ENCODE measurements at regions of chr7 and their contacts with region 1.

Region 1: GRCh38 chr7:143979205-143979758 is 20.8 kb upstream of the OR6B1 start:
- DNase-seq: no peak
- ATAC-seq: no peak
- H3K4me3 ChIP-seq: no peak overlapping the region
- H3K27ac ChIP-seq: no peak overlapping the region
- H3K4me1 ChIP-seq: no peaks in the 10 kb centered on the region
- H3K27me3 ChIP-seq: no peaks in the 10 kb centered on the region
- CTCF ChIP-seq: no peak

Region 2: GRCh38 chr7:142943706-142944268 is 1035.5 kb before region 1 on chr7:
- intact Hi-C with region 1: no loop called
- DNase-seq: no peak
- ATAC-seq: no peak
- H3K4me3 ChIP-seq: no peak overlapping the region
- H3K27ac ChIP-seq: no peak overlapping the region
- H3K4me1 ChIP-seq: no peaks in the 10 kb centered on the region
- H3K27me3 ChIP-seq: peaks cover 0 to 2% (median 0%) of the 10 kb centered on the region in 3 donors
- CTCF ChIP-seq: no peak

Region 3: GRCh38 chr7:143479055-143479766 is 500.1 kb before region 1 on chr7:
- intact Hi-C with region 1: no loop called
- DNase-seq: no peak
- ATAC-seq: no peak
- H3K4me3 ChIP-seq: no peak overlapping the region
- H3K27ac ChIP-seq: no peak overlapping the region
- H3K4me1 ChIP-seq: no peaks in the 10 kb centered on the region
- H3K27me3 ChIP-seq: no peaks in the 10 kb centered on the region
- CTCF ChIP-seq: no peak

Region 4: DNA sequence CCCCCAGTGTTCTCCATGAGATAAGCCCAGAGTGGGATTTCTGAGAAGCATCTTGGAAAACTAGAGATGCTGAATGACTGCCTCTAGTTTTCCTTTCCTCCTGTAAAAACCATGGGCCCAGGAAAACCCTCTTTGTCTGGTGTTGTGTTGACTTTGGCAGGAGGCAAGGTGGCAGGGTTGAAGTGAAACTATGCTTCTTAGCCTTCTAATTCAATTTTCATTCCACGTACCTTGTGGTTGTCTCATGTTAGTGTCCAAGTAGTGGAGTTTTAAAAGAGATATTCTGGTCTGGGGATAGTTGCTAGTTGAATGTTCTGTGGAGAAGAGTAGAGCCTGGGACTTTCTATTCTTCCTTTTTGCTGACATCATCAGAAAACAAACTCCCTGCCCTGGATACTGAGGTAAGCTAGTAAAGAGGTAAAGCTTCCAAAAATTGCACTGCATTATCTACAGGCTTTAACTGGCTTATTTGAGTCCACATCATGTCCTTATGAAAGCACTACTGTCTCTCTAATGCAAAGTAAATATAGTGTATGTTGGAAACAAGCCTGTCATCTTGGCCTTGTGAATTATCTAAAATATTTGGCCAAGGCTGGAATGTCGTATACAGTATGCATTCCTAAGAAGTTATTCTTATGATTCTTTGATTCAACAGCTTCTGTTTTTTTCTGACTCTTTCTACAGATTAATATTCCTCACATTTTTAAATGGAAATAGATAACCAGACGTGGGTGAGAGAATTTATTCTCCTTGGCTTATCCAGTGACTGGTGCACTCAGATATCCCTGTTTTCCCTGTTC is 44.6 kb before region 1 on chr7 and contains the start of gene OR2F2:
- intact Hi-C with region 1: loop called in 1 of 2 experiments (anchors 5 kb)
- DNase-seq: no peak
- ATAC-seq: no peak
- H3K4me3 ChIP-seq: no peak within 1 kb of the TSS
- H3K27ac ChIP-seq: no peak within 1 kb of the TSS
- H3K4me1 ChIP-seq: no peaks in the 10 kb centered on the region
- H3K27me3 ChIP-seq: no peaks in the 10 kb centered on the region
- CTCF ChIP-seq: no peak
- total RNA-seq, gene OR2F2: not detected

Region 5: DNA sequence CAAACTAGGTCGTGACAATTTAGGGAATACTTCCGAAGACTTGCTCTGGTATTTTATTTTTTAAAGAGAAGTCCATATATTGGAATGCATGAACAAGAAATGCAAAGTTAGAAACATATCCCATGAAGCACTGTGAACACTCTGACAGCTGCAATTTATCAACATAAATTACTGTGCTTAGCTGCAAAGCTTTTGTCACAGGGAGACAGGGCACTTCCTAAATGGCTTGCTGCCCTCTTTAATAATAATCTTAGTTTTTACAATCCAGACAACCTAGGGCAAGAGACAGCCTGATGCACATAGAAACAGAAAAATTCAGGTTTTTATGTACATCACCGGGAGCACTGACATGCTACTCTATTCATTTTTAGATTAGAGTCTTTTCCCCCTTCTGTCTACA is 502.6 kb after region 1 on chr7:
- intact Hi-C with region 1: no loop called
- DNase-seq: no peak
- ATAC-seq: no peak
- H3K4me3 ChIP-seq: no peak overlapping the region
- H3K27ac ChIP-seq: no peak overlapping the region
- H3K4me1 ChIP-seq: no peaks in the 10 kb centered on the region
- H3K27me3 ChIP-seq: no peaks in the 10 kb centered on the region
- CTCF ChIP-seq: no peak

Measured in psoas muscle (tissue), 8 donors.